IMR-90 (cell line): ENCODE measurements at regions of chr11 and their contacts with region 1.

Region 1: DNA sequence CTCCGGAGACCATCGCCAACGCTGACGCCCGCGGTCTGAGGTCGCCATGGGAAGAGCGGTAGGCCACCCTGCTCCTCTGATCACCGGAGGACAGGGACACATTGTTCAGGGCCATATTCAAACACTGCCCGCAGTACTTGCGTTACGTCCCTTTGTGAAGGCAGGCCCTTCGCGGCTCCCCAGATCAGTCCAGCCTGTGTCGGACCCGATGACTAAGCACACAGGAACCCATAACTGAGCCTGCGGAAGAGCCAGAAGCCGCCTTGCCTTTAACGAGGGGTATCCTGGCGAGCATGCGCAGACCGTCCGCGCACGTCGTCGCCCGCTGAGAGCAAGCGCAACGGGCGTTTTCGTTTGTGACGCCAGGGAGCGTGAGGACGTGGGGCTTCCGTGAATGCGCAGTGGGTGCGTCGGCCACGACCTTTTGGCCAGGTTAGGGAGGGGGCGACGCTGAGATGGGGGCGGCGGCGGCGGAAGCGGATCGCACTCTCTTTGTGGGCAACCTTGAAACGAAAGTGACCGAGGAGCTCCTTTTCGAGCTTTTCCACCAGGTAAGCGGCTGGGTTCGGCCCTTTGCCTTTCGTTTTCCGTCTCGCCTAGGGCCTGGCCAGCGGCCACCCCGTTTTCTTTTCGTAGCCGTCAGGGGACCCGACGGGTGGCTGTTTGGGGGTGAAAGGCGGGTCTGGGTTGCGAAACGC is at the starts of genes C11orf71 and RBM7:
- DNase-seq: peak; percentile 99
- ATAC-seq: peak; percentile 92
- H3K4me3 ChIP-seq: peak within 1 kb of the TSS; percentile 72
- H3K27ac ChIP-seq: peak within 1 kb of the TSS; percentile 97
- H3K4me1 ChIP-seq: peaks cover 5% of the 10 kb centered on the region; the same call in 1 of the 2 replicates
- H3K27me3 ChIP-seq: no peaks in the 10 kb centered on the region
- CTCF ChIP-seq: no peak
- POLR2A ChIP-seq: peak; percentile 94
- RAD21 ChIP-seq: 0 out of 2 replicates have a peak, but pooled peaks have one; percentile 3
- total RNA-seq, gene C11orf71: 2.3 and 3.6 TPM in 2 replicates
- total RNA-seq, gene RBM7: 110 and 111 TPM in 2 replicates

Region 2: GRCh38 chr11:114295676-114296604 is 104.4 kb before region 1 on chr11 and contains the start of gene NNMT:
- CTCF ChIA-PET with region 1: no interaction called
- POLR2A ChIA-PET with region 1: no interaction called
- dilution Hi-C with region 1: no loop called
- in situ Hi-C with region 1: no loop called
- intact Hi-C with region 1: loop called (anchors 1 kb)
- DNase-seq: peak; percentile 97
- ATAC-seq: peak; percentile 73
- H3K4me3 ChIP-seq: peak within 1 kb of the TSS; percentile 62
- H3K27ac ChIP-seq: peak within 1 kb of the TSS; percentile 98
- H3K4me1 ChIP-seq: peaks cover 18% of the 10 kb centered on the region
- H3K27me3 ChIP-seq: no peaks in the 10 kb centered on the region
- CTCF ChIP-seq: 0 out of 2 replicates have a peak, but pooled peaks have one; percentile 2
- POLR2A ChIP-seq: peak; percentile 85
- RAD21 ChIP-seq: no peak; the same call in none of the 2 replicates
- total RNA-seq, gene NNMT: 74.7 and 108 TPM in 2 replicates

Region 3: GRCh38 chr11:114348200-114349191 is 51.9 kb before region 1 on chr11:
- CTCF ChIA-PET with region 1: interaction called, 4 read pairs
- POLR2A ChIA-PET with region 1: no interaction called
- dilution Hi-C with region 1: no loop called
- in situ Hi-C with region 1: loop called (anchors 5 kb)
- intact Hi-C with region 1: loop called (anchors 1 kb)
- DNase-seq: peak; percentile 80
- ATAC-seq: peak; percentile 97
- H3K4me3 ChIP-seq: no peak overlapping the region
- H3K27ac ChIP-seq: no peak overlapping the region
- H3K4me1 ChIP-seq: no peaks in the 10 kb centered on the region
- H3K27me3 ChIP-seq: no peaks in the 10 kb centered on the region
- CTCF ChIP-seq: peak; percentile 67
- POLR2A ChIP-seq: no peak
- RAD21 ChIP-seq: peak; percentile 71

Region 4: DNA sequence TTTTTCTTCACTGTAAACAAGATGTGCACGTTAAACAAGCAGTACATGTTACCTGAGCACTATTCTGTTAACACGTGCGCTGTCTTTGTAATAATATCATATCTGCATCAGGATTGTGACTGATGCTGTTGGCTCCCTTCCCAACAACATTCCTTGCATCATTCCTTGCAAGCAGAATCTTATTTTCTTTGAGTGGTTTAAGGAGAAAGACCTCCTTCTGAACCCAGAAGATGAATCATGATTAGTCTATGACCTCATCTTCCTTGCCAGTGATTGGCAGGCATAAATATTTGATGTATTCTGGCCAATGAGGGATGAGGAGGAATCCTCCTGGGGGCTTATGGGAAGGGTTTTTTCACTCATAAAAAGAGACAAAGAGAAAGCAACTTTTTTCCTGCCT is 46.3 kb before region 1 on chr11:
- CTCF ChIA-PET with region 1: interaction called, 4 read pairs
- POLR2A ChIA-PET with region 1: no interaction called
- dilution Hi-C with region 1: no loop called
- in situ Hi-C with region 1: loop called (anchors 5 kb)
- intact Hi-C with region 1: no loop called
- DNase-seq: peak; percentile 94
- ATAC-seq: peak; percentile 71
- H3K4me3 ChIP-seq: no peak overlapping the region
- H3K27ac ChIP-seq: no peak overlapping the region
- H3K4me1 ChIP-seq: peaks cover 4% of the 10 kb centered on the region
- H3K27me3 ChIP-seq: no peaks in the 10 kb centered on the region
- CTCF ChIP-seq: no peak
- POLR2A ChIP-seq: no peak
- RAD21 ChIP-seq: no peak

Region 5: GRCh38 chr11:114366331-114367243 is 33.8 kb before region 1 on chr11:
- CTCF ChIA-PET with region 1: interaction called, 4 read pairs
- POLR2A ChIA-PET with region 1: no interaction called
- dilution Hi-C with region 1: no loop called
- in situ Hi-C with region 1: no loop called
- intact Hi-C with region 1: loop called (anchors 1 kb)
- DNase-seq: peak; percentile 92
- ATAC-seq: peak; percentile 87
- H3K4me3 ChIP-seq: no peak overlapping the region
- H3K27ac ChIP-seq: peak overlapping the region; percentile 100
- H3K4me1 ChIP-seq: peaks cover 22% of the 10 kb centered on the region
- H3K27me3 ChIP-seq: no peaks in the 10 kb centered on the region
- CTCF ChIP-seq: no peak
- POLR2A ChIP-seq: peak; percentile 40; the same call in 1 of the 2 replicates
- RAD21 ChIP-seq: no peak

Region 6: GRCh38 chr11:114439229-114440120 is 39.1 kb after region 1 on chr11 and contains the start of gene REXO2:
- CTCF ChIA-PET with region 1: no interaction called
- POLR2A ChIA-PET with region 1: no interaction called
- dilution Hi-C with region 1: no loop called
- in situ Hi-C with region 1: no loop called
- intact Hi-C with region 1: loop called (anchors 1 kb)
- DNase-seq: peak; percentile 93
- ATAC-seq: peak; percentile 93
- H3K4me3 ChIP-seq: peak within 1 kb of the TSS; percentile 89
- H3K27ac ChIP-seq: peak within 1 kb of the TSS; percentile 90
- H3K4me1 ChIP-seq: peaks cover 5% of the 10 kb centered on the region
- H3K27me3 ChIP-seq: no peaks in the 10 kb centered on the region
- CTCF ChIP-seq: peak; percentile 51
- POLR2A ChIP-seq: peak; percentile 58
- RAD21 ChIP-seq: peak; percentile 37; the same call in 1 of the 2 replicates
- total RNA-seq, gene REXO2: 179 and 276 TPM in 2 replicates